ENCODE measurements at regions of chr3 and their contacts with region 1.

Region 1: DNA sequence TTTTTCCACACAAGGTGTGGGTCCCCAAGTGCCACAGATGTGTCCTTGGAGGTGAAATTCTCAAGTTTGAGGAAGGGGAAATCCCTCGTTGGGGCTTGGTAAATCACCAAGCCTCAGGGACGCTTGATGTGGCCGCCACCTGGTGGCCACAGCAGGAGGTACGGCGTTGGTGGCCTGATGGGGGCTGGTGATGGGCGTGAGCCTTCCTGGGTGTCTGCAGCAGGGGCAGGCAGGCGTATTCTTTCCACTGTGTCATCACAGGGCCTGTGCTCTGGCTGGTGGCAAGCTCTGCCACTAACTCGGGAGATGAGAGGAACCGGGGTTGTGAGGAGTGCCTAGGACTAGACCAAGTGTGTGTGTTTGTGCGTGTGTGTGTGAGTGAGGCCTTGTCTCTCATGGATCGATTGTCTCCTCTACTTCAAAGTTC is 4.2 kb downstream of the ACOX2 start:
- DNase-seq: peak; percentile 25 to 56
- ATAC-seq: peak; percentile 59 to 69
- H3K4me3 ChIP-seq: no peak overlapping the region
- H3K27ac ChIP-seq: no peak overlapping the region
- H3K4me1 ChIP-seq: peaks cover 16 to 20% of the 10 kb centered on the region in 2 donors
- H3K27me3 ChIP-seq: no peaks in the 10 kb centered on the region
- CTCF ChIP-seq: peak; percentile 88 to 95 (median 92)
- POLR2A ChIP-seq: no peak

Region 2: GRCh38 chr3:58177747-58178527 is 354.9 kb before region 1 on chr3:
- in situ Hi-C with region 1: loop called in 1 of 4 experiments (anchors 25 kb)
- intact Hi-C with region 1: loop called (anchors 10 kb)
- DNase-seq: peak; percentile 68 to 73
- ATAC-seq: peak; percentile 88 to 93
- H3K4me3 ChIP-seq: peak overlapping the region; percentile 54 to 62 (median 58)
- H3K27ac ChIP-seq: no peak overlapping the region
- H3K4me1 ChIP-seq: peaks cover 3 to 15% of the 10 kb centered on the region in 2 donors
- H3K27me3 ChIP-seq: no peaks in the 10 kb centered on the region
- CTCF ChIP-seq: peak; percentile 87 to 93 (median 88)
- POLR2A ChIP-seq: no peak

Region 3: GRCh38 chr3:58188173-58188564 is 344.6 kb before region 1 on chr3:
- in situ Hi-C with region 1: loop called in 1 of 4 experiments (anchors 25 kb)
- intact Hi-C with region 1: loop called (anchors 10 kb)
- DNase-seq: no peak
- ATAC-seq: no peak
- H3K4me3 ChIP-seq: no peak overlapping the region
- H3K27ac ChIP-seq: peak overlapping the region in 3 of 4 donors; percentile 38 to 62 (median 60)
- H3K4me1 ChIP-seq: peaks cover 2 to 12% of the 10 kb centered on the region in 2 donors
- H3K27me3 ChIP-seq: no peaks in the 10 kb centered on the region
- CTCF ChIP-seq: no peak
- POLR2A ChIP-seq: no peak

Region 4: DNA sequence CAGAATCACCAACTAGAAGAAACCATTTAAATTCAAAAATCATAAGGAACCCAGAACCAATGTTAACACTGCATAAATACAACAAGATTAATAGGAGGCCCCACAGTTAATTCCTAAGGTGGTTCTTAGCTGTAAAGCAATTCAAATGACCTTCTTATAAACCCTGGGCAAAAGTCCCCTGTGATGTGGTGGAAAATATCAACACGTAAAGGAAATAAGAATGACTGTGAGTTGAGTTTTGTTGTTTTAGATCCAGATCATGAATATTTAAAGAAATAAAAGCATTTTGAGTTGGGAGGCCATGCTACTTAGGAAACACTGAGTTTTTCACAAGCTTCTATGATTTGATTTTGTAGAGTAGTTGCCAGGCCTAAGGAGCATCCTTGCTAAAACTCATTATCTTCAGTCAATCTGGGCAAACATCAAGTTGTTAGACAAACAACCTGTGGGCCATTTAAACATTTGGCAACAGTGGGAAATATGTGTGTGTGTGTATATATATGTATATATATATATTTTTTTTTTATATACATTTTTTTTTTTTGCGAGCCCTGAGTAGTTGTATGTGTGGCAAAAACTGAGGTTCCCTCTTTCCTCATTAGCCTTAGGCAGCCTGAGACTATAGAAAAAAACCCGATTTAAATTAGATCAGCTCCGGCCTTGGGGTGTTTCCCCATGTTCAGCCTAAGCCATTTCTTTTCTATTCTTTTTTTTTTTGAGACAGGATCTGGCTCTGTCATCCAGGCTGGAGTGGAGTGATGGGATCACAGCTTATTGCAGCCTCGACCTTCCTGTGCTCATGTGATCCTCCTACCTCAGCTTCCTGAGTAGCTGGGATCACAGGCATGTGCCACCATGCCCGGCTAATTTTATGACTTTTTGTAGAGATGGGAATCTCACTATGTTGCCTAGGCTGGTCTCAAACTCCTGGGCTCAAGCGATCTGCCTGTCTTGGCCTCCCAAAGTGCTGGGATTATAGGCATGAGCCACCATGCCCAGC is 208.1 kb before region 1 on chr3:
- in situ Hi-C with region 1: loop called in 1 of 4 experiments (anchors 5 kb)
- intact Hi-C with region 1: no loop called
- DNase-seq: no peak
- ATAC-seq: no peak
- H3K4me3 ChIP-seq: no peak overlapping the region
- H3K27ac ChIP-seq: peak overlapping the region in 2 of 4 donors; percentile 19 to 35
- H3K4me1 ChIP-seq: peaks cover 0 to 2% of the 10 kb centered on the region in 2 donors
- H3K27me3 ChIP-seq: no peaks in the 10 kb centered on the region
- CTCF ChIP-seq: no peak
- POLR2A ChIP-seq: no peak

Region 5: DNA sequence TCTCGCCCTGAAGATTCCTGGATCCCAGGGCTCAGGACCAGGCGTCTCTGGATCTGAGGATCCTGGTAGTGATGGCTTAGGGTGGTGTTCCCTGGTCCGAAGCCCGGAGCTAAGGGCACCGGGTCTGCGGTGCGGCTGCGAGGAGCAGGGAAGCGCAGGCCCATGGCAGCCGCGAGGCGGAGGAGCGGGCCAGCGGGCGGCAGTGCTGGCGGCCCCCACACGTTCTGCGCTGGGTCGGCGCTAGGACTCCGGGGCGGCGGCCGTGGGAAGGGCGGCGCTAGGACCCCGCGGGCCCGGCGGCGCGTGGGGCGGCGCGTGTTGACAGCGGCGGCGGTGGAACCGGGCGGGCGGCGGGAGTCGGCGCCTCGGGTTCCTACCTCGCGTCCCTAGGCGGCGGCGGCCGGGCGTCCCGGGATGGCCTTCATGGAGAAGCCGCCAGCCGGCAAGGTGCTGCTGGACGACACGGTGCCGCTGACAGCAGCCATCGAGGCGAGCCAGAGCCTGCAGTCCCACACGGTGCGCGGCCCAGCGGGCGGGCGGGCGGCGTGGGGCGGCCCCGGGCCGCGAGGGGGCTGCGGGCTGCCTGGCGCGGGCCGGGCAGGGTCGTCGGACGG is 200.1 kb before region 1 on chr3 and contains the start of gene PXK:
- in situ Hi-C with region 1: no loop called
- intact Hi-C with region 1: loop called (anchors 5 kb)
- DNase-seq: peak; percentile 55 to 74
- ATAC-seq: peak; percentile 84 to 87
- H3K4me3 ChIP-seq: peak within 1 kb of the TSS; percentile 84 to 92 (median 85)
- H3K27ac ChIP-seq: peak within 1 kb of the TSS; percentile 72 to 78 (median 76)
- H3K4me1 ChIP-seq: peaks cover 27 to 30% of the 10 kb centered on the region in 2 donors
- H3K27me3 ChIP-seq: no peaks in the 10 kb centered on the region
- CTCF ChIP-seq: peak in 3 of 5 experiments; percentile 25 to 54 (median 48)
- POLR2A ChIP-seq: peak; percentile 62 to 69
- total RNA-seq, gene PXK: 21.6 to 33.6 (median 24.4) TPM

Region 6: DNA sequence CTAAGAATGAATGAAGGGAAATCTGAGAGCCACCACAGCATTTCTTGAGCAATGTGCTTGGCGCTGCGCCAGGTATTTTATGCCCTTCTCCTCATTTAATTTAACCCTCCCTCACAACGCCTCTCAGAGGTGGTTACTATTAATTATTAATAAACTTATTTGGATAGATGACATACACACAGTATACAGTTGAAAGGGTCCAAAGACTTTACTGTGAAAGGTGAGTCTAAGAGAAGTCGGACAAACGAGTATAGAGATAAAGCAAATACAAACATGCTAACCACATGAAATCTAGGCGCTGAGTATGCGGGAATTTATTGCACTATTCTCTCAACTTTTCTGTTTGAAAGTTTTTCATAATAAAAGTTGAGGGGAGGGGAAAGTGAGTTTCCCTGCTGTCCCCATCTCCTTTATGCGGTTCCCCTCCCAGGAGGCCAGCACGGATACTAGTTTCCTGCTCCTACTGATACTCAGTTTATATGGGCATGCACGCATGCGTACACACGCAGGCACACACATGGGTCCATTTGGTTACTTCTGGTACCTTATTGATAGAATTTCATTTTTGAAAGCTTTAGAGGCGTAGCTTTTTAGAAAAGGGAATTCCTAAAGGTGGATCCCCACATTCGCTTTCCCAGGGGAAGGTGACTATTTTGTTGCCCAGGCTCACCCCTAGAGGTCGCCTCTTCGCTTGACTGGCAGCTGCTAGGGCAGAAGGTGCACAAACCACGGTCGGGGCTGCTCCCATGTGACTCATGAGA is 69.4 kb before region 1 on chr3:
- in situ Hi-C with region 1: loop called in 2 of 4 experiments (anchors 10 kb)
- intact Hi-C with region 1: loop called (anchors 1 kb)
- DNase-seq: peak; percentile 54 to 71
- ATAC-seq: peak; percentile 88 to 93
- H3K4me3 ChIP-seq: peak overlapping the region; percentile 12 to 50 (median 42)
- H3K27ac ChIP-seq: peak overlapping the region; percentile 22 to 61 (median 52)
- H3K4me1 ChIP-seq: peaks cover 17 to 18% of the 10 kb centered on the region in 2 donors
- H3K27me3 ChIP-seq: no peaks in the 10 kb centered on the region
- CTCF ChIP-seq: peak; percentile 65 to 83 (median 74)
- POLR2A ChIP-seq: no peak

Region 7: DNA sequence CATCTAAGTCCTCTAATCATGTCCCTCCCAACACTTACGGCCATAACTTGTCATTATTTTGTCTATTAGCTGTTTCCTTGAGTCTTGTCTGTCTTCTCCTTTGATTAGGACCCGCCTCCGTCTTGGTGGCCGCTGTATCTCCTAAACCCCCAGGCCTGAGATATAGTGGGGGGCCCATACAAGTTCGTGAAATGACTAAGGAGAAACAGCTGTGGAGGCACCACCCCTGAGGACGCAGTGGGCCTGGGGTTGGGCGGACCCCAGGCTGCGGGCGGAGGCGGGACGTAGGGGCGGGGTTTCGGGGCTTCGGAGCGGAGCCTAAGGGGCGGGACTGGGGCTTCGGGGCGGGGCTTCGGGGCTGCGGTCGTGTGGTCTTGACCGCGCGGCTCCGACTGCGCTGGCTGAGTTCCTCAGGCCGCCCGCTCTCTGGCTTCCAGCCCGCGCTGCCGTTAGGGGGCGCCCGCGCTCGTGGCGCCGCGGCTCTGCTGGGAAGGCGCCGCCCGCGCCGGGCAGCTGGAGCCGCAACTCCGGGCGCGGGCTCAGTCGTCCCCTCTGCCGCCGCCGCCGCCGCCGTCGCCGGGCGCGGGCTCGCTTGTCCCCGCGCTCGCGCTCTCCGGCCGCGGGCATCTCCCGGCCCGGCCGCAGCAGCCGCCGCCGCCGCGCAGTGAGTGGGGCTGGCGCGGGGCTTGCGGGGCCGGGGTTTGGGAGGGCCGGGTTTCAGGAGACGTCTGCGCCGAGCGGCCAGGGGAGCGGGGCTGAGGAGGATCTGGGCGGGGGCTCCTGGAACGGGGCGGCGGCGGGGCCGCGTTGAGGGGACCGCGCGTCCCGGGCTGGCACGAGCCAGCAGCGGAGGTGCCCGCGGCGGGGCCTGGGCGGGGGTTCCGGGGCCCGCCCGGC is 41.1 kb before region 1 on chr3 and contains the start of gene KCTD6:
- in situ Hi-C with region 1: no loop called
- intact Hi-C with region 1: loop called (anchors 1 kb)
- DNase-seq: peak; percentile 86 to 89
- ATAC-seq: peak; percentile 88 to 90
- H3K4me3 ChIP-seq: peak within 1 kb of the TSS; percentile 72 to 90 (median 80)
- H3K27ac ChIP-seq: peak within 1 kb of the TSS; percentile 82 to 91 (median 85)
- H3K4me1 ChIP-seq: peaks cover 48 to 49% of the 10 kb centered on the region in 2 donors
- H3K27me3 ChIP-seq: no peaks in the 10 kb centered on the region
- CTCF ChIP-seq: peak; percentile 60 to 82 (median 78)
- POLR2A ChIP-seq: peak; percentile 52 to 73
- total RNA-seq, gene KCTD6: 4.3 to 8.3 (median 5.8) TPM

Region 8: GRCh38 chr3:58518291-58518789 is 14.5 kb before region 1 on chr3:
- in situ Hi-C with region 1: no loop called
- intact Hi-C with region 1: no loop called
- DNase-seq: no peak
- ATAC-seq: no peak
- H3K4me3 ChIP-seq: no peak overlapping the region
- H3K27ac ChIP-seq: no peak overlapping the region
- H3K4me1 ChIP-seq: no peaks in the 10 kb centered on the region
- H3K27me3 ChIP-seq: no peaks in the 10 kb centered on the region
- CTCF ChIP-seq: no peak
- POLR2A ChIP-seq: no peak

Region 9: GRCh38 chr3:59654123-59654479 is 1121.3 kb after region 1 on chr3:
- in situ Hi-C with region 1: no loop called
- intact Hi-C with region 1: no loop called
- DNase-seq: peak; percentile 16 to 38
- ATAC-seq: peak; percentile 36 to 58
- H3K4me3 ChIP-seq: no peak overlapping the region
- H3K27ac ChIP-seq: peak overlapping the region in 1 of 4 donors; percentile 10
- H3K4me1 ChIP-seq: no peaks in the 10 kb centered on the region
- H3K27me3 ChIP-seq: no peaks in the 10 kb centered on the region
- CTCF ChIP-seq: no peak
- POLR2A ChIP-seq: no peak